ENCODE measurements at regions of chr12 and their contacts with region 1.

Region 1: GRCh38 chr12:12724661-12725545 is 7.7 kb downstream of the CDKN1B start:
- DNase-seq: peak; percentile 93 to 97 (median 96)
- H3K4me3 ChIP-seq: peak overlapping the region in 1 of 2 donors; percentile 80
- H3K4me3 Mint-ChIP-seq: peak overlapping the region; percentile 89 to 96 (median 92)
- H3K27ac ChIP-seq: peak overlapping the region; percentile 95
- H3K27ac Mint-ChIP-seq: peak overlapping the region; percentile 95 to 99 (median 97)
- H3K4me1 ChIP-seq: peaks cover 56% of the 10 kb centered on the region
- H3K4me1 Mint-ChIP-seq: peaks cover 37 to 72% (median 43%) of the 10 kb centered on the region in 4 donors
- H3K27me3 ChIP-seq: no peaks in the 10 kb centered on the region
- H3K27me3 Mint-ChIP-seq: peaks cover 0 to 1% of the 10 kb centered on the region in 2 donors

Region 2: DNA sequence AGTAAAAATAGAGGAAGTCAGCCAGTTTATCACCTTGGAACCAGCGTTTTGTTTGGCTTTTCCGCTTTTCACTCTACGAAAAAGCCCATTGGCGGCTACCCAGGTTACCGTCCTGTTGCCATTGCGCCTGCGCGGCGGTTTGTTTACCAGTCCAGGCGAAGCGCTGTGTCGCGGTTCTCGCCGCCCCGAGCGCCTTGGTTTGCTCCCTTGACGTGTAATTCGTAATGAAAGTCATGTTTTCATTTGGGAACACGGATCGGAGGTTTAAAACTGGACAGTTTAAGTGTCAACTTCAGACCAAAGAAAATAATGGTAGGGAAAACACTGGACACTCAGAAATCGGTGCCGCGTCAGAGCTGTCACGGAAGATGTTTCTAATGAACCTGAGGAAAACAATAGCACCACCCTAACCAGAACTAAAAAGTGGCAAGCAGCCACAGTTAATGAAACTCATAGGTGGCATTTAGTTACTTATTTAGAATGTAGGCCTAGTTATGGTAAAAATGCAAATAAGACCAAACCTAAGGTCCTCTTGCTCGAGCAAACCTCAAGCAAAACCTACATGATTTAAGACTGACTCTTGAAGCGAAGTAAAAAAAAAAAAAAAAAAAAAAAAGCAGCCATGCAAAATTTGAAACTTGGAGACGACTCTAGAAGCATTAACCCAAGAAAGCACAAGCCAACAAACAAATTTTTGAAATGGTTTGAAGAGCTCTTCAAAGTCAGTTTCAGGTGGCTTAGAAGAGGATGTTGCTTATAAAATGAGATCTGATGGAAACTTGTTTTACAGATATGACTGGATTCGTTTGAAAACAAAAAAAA is 28.1 kb before region 1 on chr12:
- CTCF ChIA-PET with region 1: interaction called, 4 read pairs
- POLR2A ChIA-PET with region 1: interaction called, 1,446 read pairs
- intact Hi-C with region 1: loop called (anchors 1 kb)
- DNase-seq: peak; percentile 93 to 96 (median 95)
- H3K4me3 ChIP-seq: peak overlapping the region; percentile 37 to 74
- H3K4me3 Mint-ChIP-seq: peak overlapping the region; percentile 86 to 97 (median 94)
- H3K27ac ChIP-seq: peak overlapping the region; percentile 87
- H3K27ac Mint-ChIP-seq: peak overlapping the region; percentile 98 to 100 (median 100)
- H3K4me1 ChIP-seq: peaks cover 24% of the 10 kb centered on the region
- H3K4me1 Mint-ChIP-seq: peaks cover 16 to 41% (median 30%) of the 10 kb centered on the region in 4 donors
- H3K27me3 ChIP-seq: no peaks in the 10 kb centered on the region
- H3K27me3 Mint-ChIP-seq: no peaks in the 10 kb centered on the region

Region 3: GRCh38 chr12:12803186-12803585 is 78.3 kb after region 1 on chr12:
- CTCF ChIA-PET with region 1: no interaction called
- POLR2A ChIA-PET with region 1: no interaction called
- intact Hi-C with region 1: loop called (anchors 1 kb)
- DNase-seq: peak; percentile 3 to 74 (median 15)
- H3K4me3 ChIP-seq: no peak overlapping the region
- H3K4me3 Mint-ChIP-seq: peak overlapping the region in 6 of 8 donors; percentile 11 to 72 (median 32)
- H3K27ac ChIP-seq: no peak overlapping the region
- H3K27ac Mint-ChIP-seq: peak overlapping the region; percentile 57 to 97 (median 87)
- H3K4me1 ChIP-seq: peaks cover 42% of the 10 kb centered on the region
- H3K4me1 Mint-ChIP-seq: peaks cover 23 to 59% (median 44%) of the 10 kb centered on the region in 4 donors
- H3K27me3 ChIP-seq: no peaks in the 10 kb centered on the region
- H3K27me3 Mint-ChIP-seq: no peaks in the 10 kb centered on the region

Region 4: GRCh38 chr12:12934556-12934955 is 209.7 kb after region 1 on chr12:
- CTCF ChIA-PET with region 1: no interaction called
- POLR2A ChIA-PET with region 1: no interaction called
- intact Hi-C with region 1: no loop called
- DNase-seq: no peak
- H3K4me3 ChIP-seq: no peak overlapping the region
- H3K4me3 Mint-ChIP-seq: peak overlapping the region in 1 of 8 donors; percentile 36
- H3K27ac ChIP-seq: no peak overlapping the region
- H3K27ac Mint-ChIP-seq: no peak overlapping the region
- H3K4me1 ChIP-seq: no peaks in the 10 kb centered on the region
- H3K4me1 Mint-ChIP-seq: peaks cover 0 to 8% (median 0%) of the 10 kb centered on the region in 4 donors
- H3K27me3 ChIP-seq: no peaks in the 10 kb centered on the region
- H3K27me3 Mint-ChIP-seq: peaks cover 5 to 13% of the 10 kb centered on the region in 2 donors

Region 5: GRCh38 chr12:13559318-13559978 is 834.5 kb after region 1 on chr12:
- CTCF ChIA-PET with region 1: no interaction called
- POLR2A ChIA-PET with region 1: no interaction called
- intact Hi-C with region 1: no loop called
- DNase-seq: no peak
- H3K4me3 ChIP-seq: no peak overlapping the region
- H3K4me3 Mint-ChIP-seq: no peak overlapping the region
- H3K27ac ChIP-seq: no peak overlapping the region
- H3K27ac Mint-ChIP-seq: no peak overlapping the region
- H3K4me1 ChIP-seq: no peaks in the 10 kb centered on the region
- H3K4me1 Mint-ChIP-seq: no peaks in the 10 kb centered on the region
- H3K27me3 ChIP-seq: no peaks in the 10 kb centered on the region
- H3K27me3 Mint-ChIP-seq: peaks cover 0 to 2% of the 10 kb centered on the region in 2 donors

Measured in CD4-positive, alpha-beta memory T cell (primary cell).